MCF 10A (cell line): ENCODE measurements at regions of chr5 and their contacts with region 1.

Region 1: DNA sequence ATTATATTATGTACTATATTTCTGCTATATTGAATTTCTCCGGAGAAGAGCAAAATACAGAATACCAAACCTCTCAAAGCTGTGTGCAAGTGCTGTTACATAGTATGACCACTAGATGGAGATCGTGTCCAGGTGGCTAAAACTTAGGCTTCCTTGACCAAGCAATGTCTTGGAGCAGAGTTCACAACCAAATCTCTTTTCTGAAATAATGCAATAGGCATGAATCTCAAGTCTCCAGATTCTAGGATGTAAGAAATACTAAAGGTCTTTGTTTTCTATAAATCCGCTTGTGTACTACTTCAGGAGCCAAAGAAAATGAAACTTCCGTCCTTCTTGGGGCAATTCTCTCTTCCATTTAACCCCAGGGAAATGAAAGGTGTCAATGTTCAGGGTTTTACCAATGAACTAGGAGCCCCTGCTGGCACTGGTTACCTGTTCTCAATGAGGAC is 181.5 kb upstream of the RAI14 start:
- DNase-seq: peak; percentile 67
- H3K4me3 Mint-ChIP-seq: no peak overlapping the region
- H3K27ac Mint-ChIP-seq: no peak overlapping the region
- H3K4me1 Mint-ChIP-seq: no peaks in the 10 kb centered on the region
- H3K27me3 Mint-ChIP-seq: peaks cover 16% of the 10 kb centered on the region
- CTCF ChIP-seq: peak; percentile 90

Region 2: DNA sequence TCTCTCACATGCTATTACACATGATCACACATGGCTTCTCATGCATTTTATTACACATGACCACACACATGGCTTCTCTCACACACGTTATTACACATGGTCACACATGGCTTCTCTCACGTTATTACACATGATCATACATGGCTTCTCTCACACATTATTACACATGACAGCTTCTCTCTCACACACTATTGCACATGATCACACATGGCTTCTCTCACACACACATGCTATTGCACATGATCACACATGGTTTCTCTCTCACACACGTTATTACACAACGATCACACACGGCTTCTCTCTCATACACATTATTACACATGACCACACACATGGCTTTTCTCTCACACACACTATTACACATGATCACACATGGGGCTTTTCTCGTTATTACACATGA is 489.1 kb before region 1 on chr5:
- CTCF ChIA-PET with region 1: no interaction called
- POLR2A ChIA-PET with region 1: no interaction called
- intact Hi-C with region 1: no loop called
- DNase-seq: no peak
- H3K4me3 Mint-ChIP-seq: no peak overlapping the region
- H3K27ac Mint-ChIP-seq: no peak overlapping the region
- H3K4me1 Mint-ChIP-seq: no peaks in the 10 kb centered on the region
- H3K27me3 Mint-ChIP-seq: no peaks in the 10 kb centered on the region
- CTCF ChIP-seq: no peak

Region 3: GRCh38 chr5:34447424-34447823 is 27.2 kb before region 1 on chr5:
- CTCF ChIA-PET with region 1: no interaction called
- POLR2A ChIA-PET with region 1: no interaction called
- intact Hi-C with region 1: no loop called
- DNase-seq: no peak
- H3K4me3 Mint-ChIP-seq: no peak overlapping the region
- H3K27ac Mint-ChIP-seq: no peak overlapping the region
- H3K4me1 Mint-ChIP-seq: no peaks in the 10 kb centered on the region
- H3K27me3 Mint-ChIP-seq: no peaks in the 10 kb centered on the region
- CTCF ChIP-seq: no peak

Region 4: GRCh38 chr5:35182541-35183535 is 708.2 kb after region 1 on chr5:
- CTCF ChIA-PET with region 1: no interaction called
- POLR2A ChIA-PET with region 1: no interaction called
- intact Hi-C with region 1: loop called (anchors 10 kb)
- DNase-seq: peak; percentile 75
- H3K4me3 Mint-ChIP-seq: no peak overlapping the region
- H3K27ac Mint-ChIP-seq: no peak overlapping the region
- H3K4me1 Mint-ChIP-seq: no peaks in the 10 kb centered on the region
- H3K27me3 Mint-ChIP-seq: peaks cover 20% of the 10 kb centered on the region
- CTCF ChIP-seq: peak; percentile 59